ENCODE measurements at regions of chr10 and their contacts with region 1.

Region 1: DNA sequence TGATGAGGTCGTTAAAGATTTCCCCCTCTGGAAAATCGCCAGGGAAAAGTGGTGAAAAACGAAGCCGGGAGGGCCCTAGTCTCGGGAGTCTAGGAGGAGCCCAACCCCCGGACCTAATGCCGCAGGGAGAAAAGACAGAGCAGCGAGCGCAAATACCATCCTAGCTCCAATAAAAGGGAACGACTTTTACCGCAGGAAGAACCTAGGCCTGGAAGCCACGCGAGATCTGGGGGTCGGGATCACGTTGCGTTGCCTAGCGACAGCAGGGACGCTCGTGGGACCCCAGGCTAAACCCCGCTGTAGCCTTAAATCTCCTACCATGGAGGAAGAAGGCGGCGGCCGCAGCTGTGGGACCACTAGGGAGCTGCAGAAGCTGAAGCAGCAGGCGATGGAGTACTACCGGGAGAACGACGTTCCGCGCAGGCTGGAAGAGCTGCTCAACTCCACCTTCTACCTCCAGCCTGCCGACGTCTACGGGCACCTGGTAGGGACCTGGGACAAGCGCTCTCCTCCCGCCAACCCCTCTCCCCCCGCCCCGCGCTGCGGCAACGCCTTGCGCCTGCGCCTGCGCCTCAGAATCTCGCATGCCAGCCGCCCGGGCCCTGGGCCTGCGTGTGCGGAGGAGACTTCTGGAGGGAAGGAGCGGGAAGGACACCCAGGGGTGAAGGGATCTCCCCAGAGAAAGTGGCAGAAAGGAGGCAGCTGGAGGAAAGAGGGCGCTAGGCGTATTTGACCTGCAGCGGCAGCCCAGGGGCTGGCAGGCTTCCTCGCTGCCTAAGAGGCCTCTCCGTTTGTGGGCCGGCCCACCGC is at the start of gene ENO4:
- DNase-seq: peak; percentile 21
- H3K4me3 Mint-ChIP-seq: peak within 1 kb of the TSS; percentile 23
- H3K27ac Mint-ChIP-seq: no peak within 1 kb of the TSS
- H3K4me1 Mint-ChIP-seq: peaks cover 13% of the 10 kb centered on the region
- H3K27me3 Mint-ChIP-seq: peaks cover 58% of the 10 kb centered on the region
- total RNA-seq, gene ENO4: not detected

Region 2: DNA sequence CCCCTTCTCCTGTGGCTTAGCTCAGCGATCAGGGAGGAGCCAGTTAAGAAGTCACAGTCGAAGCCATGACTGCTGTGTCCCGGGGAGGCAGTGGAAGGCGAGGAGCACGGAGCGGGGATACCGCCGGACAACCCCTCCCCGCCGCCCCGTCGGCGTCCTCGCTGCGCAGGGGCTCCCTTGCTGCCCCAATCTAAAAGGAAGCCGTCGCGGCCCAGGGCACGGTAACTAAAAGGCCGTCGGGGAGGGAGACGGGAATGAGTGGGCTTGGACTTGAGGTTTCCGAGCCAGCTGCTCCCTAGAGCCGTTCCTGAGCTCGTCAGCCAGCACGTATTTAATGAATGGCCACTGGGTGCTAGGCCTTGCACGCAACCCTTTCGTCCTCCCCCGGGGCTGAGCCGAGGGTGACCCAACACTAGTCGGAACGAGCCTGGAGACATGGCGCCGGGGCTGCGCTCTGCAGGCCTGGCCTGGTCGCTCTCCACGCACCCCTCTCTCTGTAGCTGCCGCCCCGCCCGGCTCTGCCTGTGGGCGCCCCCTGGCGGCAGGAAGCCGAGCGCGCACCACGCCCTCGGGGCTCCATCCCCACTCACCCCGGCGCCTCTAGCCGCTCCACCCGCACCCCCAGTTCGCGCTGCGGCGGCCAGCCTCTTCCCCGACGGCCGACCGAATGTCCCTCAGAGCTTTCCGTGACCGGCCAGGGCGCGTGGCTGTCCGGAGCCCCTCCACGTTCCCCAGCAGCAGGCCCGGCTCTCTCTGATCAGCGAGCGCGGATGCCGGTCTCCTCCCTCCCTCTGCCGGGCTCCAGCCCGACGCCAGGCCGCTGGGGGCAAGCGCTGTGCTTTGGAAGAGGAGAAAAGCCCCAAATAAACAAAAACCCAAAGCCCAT is 318.6 kb after region 1 on chr10:
- CTCF ChIA-PET with region 1: interaction called, 6 read pairs
- intact Hi-C with region 1: loop called (anchors 1 kb)
- DNase-seq: peak; percentile 65
- H3K4me3 Mint-ChIP-seq: no peak overlapping the region
- H3K27ac Mint-ChIP-seq: no peak overlapping the region
- H3K4me1 Mint-ChIP-seq: peaks cover 44% of the 10 kb centered on the region
- H3K27me3 Mint-ChIP-seq: peaks cover 77% of the 10 kb centered on the region

Measured in activated naive CD4-positive, alpha-beta T cell treated with anti-CD3 and anti-CD28 coated beads for 36 hours (primary cell).